ENCODE measurements at regions of chr4 and their contacts with region 1.

Region 1: DNA sequence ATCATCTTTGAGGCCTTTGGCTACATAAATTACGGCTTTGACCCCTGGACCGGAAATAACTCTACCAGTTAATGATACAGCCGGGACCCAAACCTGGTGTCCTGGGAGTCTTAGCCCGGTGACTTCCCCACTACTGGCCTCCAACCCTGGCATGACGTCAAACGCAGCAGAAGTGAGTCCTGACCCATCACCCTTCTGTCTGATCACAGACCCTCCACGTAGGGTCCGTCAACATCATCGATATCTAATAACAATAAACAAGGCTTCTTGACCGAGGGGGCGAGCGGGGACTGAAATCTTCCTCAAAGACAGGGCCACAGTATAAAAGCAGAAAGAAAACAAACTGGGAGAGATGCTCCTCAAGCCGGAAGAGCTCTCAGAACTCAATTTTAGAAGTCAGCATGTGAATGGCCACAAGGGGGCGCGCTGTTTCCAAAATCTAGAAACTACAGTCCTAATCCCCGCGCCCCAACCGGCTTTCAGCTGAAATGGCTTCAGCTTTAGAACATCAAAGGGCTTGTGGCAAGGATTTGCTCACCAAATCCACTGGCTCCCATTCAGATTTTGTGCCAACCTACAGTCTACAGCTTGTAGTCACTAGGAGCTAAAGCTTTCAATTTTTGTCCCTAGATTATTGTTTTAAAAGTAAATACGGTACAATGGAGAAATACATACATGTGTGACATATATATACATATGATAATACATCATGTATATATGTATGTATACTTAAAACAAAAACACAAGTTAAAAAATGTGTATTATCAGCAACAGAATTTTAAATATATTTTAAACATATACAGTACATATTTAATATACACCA is 46.4 kb upstream of the ENPP6 start:
- DNase-seq: peak; percentile 81
- H3K4me3 ChIP-seq: no peak overlapping the region; a peak in 1 of 4 replicates
- H3K27ac ChIP-seq: no peak overlapping the region
- H3K4me1 ChIP-seq: peaks cover 2 to 17% of the 10 kb centered on the region in 2 experiments; a peak in 2 of 4 replicates
- H3K27me3 ChIP-seq: no peaks in the 10 kb centered on the region
- CTCF ChIP-seq: peak; percentile 86
- EP300 ChIP-seq: no peak
- RAD21 ChIP-seq: peak; percentile 90

Region 2: GRCh38 chr4:184250795-184251669 is 13.1 kb before region 1 on chr4:
- CTCF ChIA-PET with region 1: interaction called, 45 read pairs
- POLR2A ChIA-PET with region 1: no interaction called
- DNase-seq: peak; percentile 70
- H3K4me3 ChIP-seq: peak overlapping the region in 1 of 2 experiments; percentile 5; a peak in 1 of 4 replicates
- H3K27ac ChIP-seq: no peak overlapping the region
- H3K4me1 ChIP-seq: peaks cover 0 to 11% of the 10 kb centered on the region in 2 experiments; a peak in 1 of 4 replicates
- H3K27me3 ChIP-seq: no peaks in the 10 kb centered on the region
- CTCF ChIP-seq: peak; percentile 78
- EP300 ChIP-seq: no peak
- RAD21 ChIP-seq: peak; percentile 68

Region 3: DNA sequence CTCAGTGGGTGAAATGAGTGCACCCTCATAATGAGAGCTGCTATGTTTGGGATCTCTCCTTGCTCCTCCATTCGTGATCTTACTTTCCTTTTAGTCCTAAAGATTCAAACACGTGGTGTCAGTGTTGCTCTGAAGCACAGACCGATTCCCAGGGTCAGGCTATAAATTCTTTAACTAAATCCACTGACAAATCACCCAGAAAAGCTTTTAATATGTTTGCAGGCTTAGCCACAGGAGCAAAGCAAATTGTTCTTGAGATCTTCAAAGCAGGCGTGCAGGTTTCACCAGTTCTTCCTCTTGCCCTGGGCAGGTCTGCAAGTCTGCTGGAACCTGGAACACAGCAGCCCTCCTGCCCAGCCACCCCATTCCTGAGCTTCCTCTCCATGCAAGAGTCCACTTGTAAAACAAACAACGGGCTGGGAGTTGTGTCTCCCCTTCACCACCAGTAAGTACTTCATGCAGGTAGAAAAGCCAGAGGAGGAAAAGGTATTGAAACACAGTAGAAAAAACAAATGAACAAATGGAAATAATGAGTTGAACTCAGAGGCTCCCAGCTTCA is 23.7 kb after region 1 on chr4:
- CTCF ChIA-PET with region 1: interaction called, 11 read pairs
- POLR2A ChIA-PET with region 1: no interaction called
- DNase-seq: no peak
- H3K4me3 ChIP-seq: no peak overlapping the region
- H3K27ac ChIP-seq: no peak overlapping the region
- H3K4me1 ChIP-seq: no peaks in the 10 kb centered on the region
- H3K27me3 ChIP-seq: no peaks in the 10 kb centered on the region
- CTCF ChIP-seq: peak; percentile 30; the same call in 1 of the 2 replicates
- EP300 ChIP-seq: no peak
- RAD21 ChIP-seq: peak; percentile 29; the same call in 1 of the 2 replicates

Region 4: DNA sequence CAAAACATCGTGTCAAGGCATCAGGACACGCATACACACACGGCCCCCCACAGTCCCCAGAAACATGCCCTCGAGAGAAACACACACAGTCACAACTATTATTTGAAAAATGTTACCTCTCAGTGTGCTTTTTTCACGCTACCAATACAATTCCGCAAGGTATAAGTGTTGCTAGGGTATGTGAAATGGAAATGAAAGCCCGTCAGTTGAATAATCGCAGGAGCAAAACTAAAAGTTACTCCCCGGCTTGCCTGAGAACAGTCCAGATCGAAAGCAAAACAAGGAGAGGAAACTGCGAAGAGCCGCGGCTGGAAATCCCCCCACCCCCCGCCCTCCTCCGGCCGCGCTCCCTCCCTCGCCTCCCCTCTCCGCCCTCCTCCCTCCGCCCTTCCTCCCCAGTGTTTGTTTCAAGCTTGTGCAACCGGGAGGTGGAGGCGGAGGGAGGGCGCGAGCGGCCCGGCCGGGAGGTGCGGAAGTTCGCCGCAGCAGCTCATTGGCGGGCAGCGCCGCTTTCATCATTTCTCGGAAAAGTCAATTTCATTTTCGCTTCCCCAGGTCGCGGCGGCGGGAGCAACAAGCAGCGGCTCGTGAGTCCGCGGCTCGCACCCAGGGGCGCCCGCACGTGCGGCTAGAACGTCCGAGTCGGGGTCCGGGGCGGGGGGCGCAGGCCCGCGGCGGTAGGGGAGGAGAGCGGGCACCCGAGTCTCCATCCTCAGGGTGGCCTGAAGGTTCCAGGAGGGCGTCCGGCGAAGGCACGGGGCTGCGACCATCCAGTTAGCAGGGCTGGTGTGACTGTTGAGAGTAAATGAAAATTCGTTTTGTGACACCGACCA is 210.4 kb after region 1 on chr4 and contains the start of gene IRF2:
- CTCF ChIA-PET with region 1: interaction called, 13 read pairs
- POLR2A ChIA-PET with region 1: interaction called, 7 read pairs
- DNase-seq: peak; percentile 99
- H3K4me3 ChIP-seq: peak within 1 kb of the TSS; percentile 60 to 75
- H3K27ac ChIP-seq: peak within 1 kb of the TSS; percentile 90 to 97
- H3K4me1 ChIP-seq: peaks cover 0 to 28% of the 10 kb centered on the region in 2 experiments; a peak in 2 of 4 replicates
- H3K27me3 ChIP-seq: no peaks in the 10 kb centered on the region
- CTCF ChIP-seq: no peak
- EP300 ChIP-seq: peak in 1 of 2 experiments; percentile 39; a peak in 1 of 4 replicates
- RAD21 ChIP-seq: no peak
- polyA plus RNA-seq, gene IRF2: 23.3 and 23.6 TPM in 2 replicates

Region 5: DNA sequence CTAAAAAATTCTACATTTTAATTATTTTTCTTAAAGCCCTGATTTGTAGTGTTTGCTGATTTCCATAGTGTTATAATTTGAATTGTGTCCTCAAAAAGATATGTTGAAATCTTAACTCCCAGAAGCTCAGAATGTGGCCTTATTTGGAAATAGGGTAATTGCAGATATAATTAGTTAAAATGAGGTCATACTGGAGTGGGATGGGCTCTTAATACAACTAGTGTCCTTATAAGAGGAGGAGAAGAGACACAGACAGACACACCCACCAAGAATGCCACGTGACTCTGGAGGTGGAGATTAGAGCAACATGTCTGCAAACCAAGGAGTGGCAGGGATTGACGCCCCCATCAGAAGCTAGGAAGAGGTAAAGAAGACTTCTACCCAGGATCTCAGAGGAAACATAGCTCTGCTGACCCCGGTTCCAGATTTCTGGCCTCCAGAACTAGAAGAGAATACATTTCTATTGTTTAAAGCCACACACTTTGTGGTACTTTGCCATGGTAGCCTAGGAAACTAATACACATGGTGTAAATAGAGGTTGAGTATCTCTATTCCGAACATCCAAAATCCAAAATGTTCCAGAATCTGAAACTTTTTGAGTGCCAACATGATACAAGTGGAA is 280.8 kb after region 1 on chr4:
- CTCF ChIA-PET with region 1: interaction called, 72 read pairs
- POLR2A ChIA-PET with region 1: interaction called, 3 read pairs
- DNase-seq: no peak
- H3K4me3 ChIP-seq: no peak overlapping the region
- H3K27ac ChIP-seq: no peak overlapping the region
- H3K4me1 ChIP-seq: peaks cover 0 to 11% of the 10 kb centered on the region in 2 experiments; a peak in 2 of 4 replicates
- H3K27me3 ChIP-seq: no peaks in the 10 kb centered on the region
- CTCF ChIP-seq: no peak
- EP300 ChIP-seq: no peak
- RAD21 ChIP-seq: no peak

Region 6: DNA sequence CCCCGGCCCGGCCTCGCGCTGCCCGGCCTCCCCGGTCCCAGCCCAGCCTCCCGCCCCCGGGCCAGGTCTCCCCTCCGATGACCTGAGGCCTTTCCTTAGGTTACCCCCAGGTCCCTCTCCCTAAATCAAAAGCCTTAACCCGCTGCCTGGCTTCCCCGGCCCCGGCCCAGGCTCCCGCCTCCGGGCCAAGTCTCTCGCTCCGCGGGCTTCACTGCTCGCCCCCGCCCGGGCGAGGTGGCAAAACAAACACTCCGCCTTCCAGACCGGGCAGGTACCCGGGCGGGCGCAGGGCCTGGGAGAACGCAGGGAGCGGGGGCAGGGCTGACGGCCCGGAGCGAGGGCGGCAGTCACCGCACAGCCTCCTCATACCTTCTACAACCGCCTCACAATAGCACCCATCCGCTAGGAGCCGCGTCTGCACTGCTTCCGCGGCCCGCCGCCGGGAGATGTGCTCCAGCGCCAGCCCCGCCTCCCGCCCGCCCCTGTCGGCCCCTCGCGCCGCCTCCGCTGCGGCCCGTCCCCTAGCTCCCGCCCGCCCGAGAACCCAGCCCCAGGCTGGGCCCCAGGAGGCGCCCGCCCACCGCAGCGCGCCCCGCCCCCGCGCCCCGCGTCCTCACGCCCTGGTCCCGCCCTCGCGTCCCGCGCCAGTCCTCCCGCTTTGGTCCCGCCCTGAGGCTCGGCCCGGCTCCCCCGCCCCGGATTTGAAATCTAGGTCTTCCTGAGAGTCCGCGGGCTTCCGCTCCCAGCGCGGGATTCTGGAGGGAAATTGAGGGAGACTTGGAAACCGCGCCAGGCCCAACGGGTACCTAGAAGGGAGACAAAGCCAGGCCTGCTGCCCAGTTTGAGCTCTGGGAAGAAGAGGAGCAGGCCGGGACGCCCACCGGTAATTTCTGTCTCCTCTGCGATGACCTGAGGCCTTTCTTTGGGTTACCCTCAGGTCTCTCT is 385.2 kb after region 1 on chr4 and contains the starts of genes CASP3 and PRIMPOL:
- CTCF ChIA-PET with region 1: interaction called, 16 read pairs
- POLR2A ChIA-PET with region 1: interaction called, 3 read pairs
- DNase-seq: peak; percentile 95
- H3K4me3 ChIP-seq: peak within 1 kb of the TSS; percentile 75 to 86
- H3K27ac ChIP-seq: peak within 1 kb of the TSS; percentile 91 to 94
- H3K4me1 ChIP-seq: peaks cover 26 to 27% of the 10 kb centered on the region in 2 experiments; a peak in 3 of 4 replicates
- H3K27me3 ChIP-seq: no peaks in the 10 kb centered on the region
- CTCF ChIP-seq: peak; percentile 22; the same call in 1 of the 2 replicates
- EP300 ChIP-seq: 0 out of 4 replicates have a peak, but pooled peaks have one; percentile 7 to 8
- RAD21 ChIP-seq: peak; percentile 52
- polyA plus RNA-seq, gene CASP3: 15.5 and 21.8 TPM in 2 replicates
- polyA plus RNA-seq, gene PRIMPOL: 8.0 and 11.9 TPM in 2 replicates